ENCODE measurements at regions of chr2 and their contacts with region 1.

Region 1: DNA sequence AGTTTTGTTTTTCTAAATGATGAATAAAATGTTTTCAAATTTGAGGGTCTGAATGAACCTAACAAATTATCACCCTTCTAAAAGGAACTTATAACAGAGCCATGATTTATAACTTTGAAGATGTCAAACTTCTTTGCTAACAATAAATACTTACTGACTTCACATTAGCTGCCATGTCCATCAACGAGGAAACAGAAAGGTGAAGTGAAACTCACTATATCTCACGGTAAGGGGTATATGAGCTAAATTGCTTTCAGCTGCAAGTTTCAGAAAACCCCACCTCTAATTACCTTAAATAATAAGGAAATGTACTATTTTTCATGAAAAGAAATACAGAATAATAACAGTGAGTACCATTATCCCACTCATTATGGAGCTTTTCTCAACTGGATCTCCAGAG is 350.8 kb upstream of the NT5C1B start:
- DNase-seq: peak; percentile 82
- H3K4me3 ChIP-seq: peak overlapping the region; percentile 42
- H3K27ac ChIP-seq: peak overlapping the region; percentile 77
- H3K4me1 ChIP-seq: peaks cover 33% of the 10 kb centered on the region
- CTCF ChIP-seq: no peak

Region 2: GRCh38 chr2:18903750-18904149 is 36.4 kb before region 1 on chr2:
- CTCF ChIA-PET with region 1: no interaction called
- POLR2A ChIA-PET with region 1: interaction called, 39 read pairs
- intact Hi-C with region 1: loop called (anchors 2 kb)
- DNase-seq: peak; percentile 77
- H3K4me3 ChIP-seq: no peak overlapping the region
- H3K27ac ChIP-seq: peak overlapping the region; percentile 23
- H3K4me1 ChIP-seq: peaks cover 20% of the 10 kb centered on the region
- CTCF ChIP-seq: no peak

Region 3: GRCh38 chr2:19009456-19009879 is 69.3 kb after region 1 on chr2:
- CTCF ChIA-PET with region 1: no interaction called
- POLR2A ChIA-PET with region 1: no interaction called
- intact Hi-C with region 1: no loop called
- DNase-seq: no peak
- H3K4me3 ChIP-seq: no peak overlapping the region
- H3K27ac ChIP-seq: no peak overlapping the region
- H3K4me1 ChIP-seq: no peaks in the 10 kb centered on the region
- CTCF ChIP-seq: no peak